ENCODE measurements at regions of chr14 and their contacts with region 1.

Region 1: GRCh38 chr14:35365130-35366055 is 39.2 kb downstream of the NFKBIA start:
- DNase-seq: no peak
- H3K4me3 ChIP-seq: no peak overlapping the region
- H3K27ac ChIP-seq: no peak overlapping the region
- H3K4me1 ChIP-seq: peaks cover 0 to 18% (median 7%) of the 10 kb centered on the region in 4 experiments; a peak in 5 of 7 replicates
- H3K27me3 ChIP-seq: no peaks in the 10 kb centered on the region
- CTCF ChIP-seq: no peak
- EP300 ChIP-seq: no peak
- POLR2A ChIP-seq: no peak
- RAD21 ChIP-seq: no peak

Region 2: GRCh38 chr14:35347323-35348043 is 17.9 kb before region 1 on chr14:
- CTCF ChIA-PET with region 1: interaction called, 18 read pairs
- POLR2A ChIA-PET with region 1: interaction called, 7 read pairs
- DNase-seq: peak in 1 of 2 experiments; percentile 52
- H3K4me3 ChIP-seq: no peak overlapping the region
- H3K27ac ChIP-seq: no peak overlapping the region
- H3K4me1 ChIP-seq: peaks cover 3 to 16% (median 7%) of the 10 kb centered on the region in 4 experiments
- H3K27me3 ChIP-seq: no peaks in the 10 kb centered on the region
- CTCF ChIP-seq: no peak
- EP300 ChIP-seq: no peak
- POLR2A ChIP-seq: no peak
- RAD21 ChIP-seq: no peak